ENCODE measurements at regions of chr6 and their contacts with region 1.

Region 1: GRCh38 chr6:15779726-15780125 is 116.9 kb upstream of the DTNBP1 start:
- DNase-seq: no peak
- ATAC-seq: no peak
- H3K4me3 ChIP-seq: no peak overlapping the region
- H3K27ac ChIP-seq: no peak overlapping the region
- H3K4me1 ChIP-seq: no peaks in the 10 kb centered on the region
- H3K27me3 ChIP-seq: no peaks in the 10 kb centered on the region
- CTCF ChIP-seq: no peak
- POLR2A ChIP-seq: no peak

Region 2: DNA sequence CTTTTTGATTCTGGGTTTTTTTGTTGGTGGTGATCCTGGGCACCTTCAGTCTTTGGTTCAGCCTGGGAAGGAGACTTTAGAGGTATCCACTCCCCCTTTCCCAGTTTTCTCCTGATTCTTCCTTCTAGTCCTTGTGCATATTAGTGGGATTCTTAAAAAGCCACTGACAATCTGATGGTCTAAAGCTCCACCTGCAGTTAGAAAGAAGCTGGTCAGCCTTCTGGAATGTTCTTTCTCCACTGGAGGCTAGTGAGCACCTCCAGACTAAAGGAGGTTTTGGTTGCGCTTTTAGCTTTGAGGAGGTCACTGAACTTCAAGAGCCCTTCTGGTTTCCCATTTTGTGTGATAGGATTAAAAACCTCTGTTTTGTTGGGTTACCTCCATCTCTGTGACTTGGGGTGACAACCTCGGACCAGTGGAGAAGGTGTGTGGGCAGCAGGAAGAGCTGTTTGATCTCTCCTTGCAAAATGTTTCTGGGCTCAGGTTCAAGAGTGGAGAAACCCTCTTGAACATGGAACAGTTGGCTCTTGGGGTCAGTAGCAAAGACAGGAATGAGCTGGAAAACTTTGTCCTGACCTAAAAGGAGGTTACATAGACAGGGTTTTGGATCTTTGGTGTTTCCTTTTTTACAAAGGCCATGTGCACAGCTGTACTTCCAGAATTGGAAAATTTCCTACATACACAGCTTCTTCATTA is 504.9 kb before region 1 on chr6:
- intact Hi-C with region 1: no loop called
- DNase-seq: no peak
- ATAC-seq: peak in 3 of 4 donors; percentile 28 to 48 (median 42)
- H3K4me3 ChIP-seq: no peak overlapping the region
- H3K27ac ChIP-seq: no peak overlapping the region
- H3K4me1 ChIP-seq: peaks cover 0 to 56% (median 32%) of the 10 kb centered on the region in 12 donors
- H3K27me3 ChIP-seq: no peaks in the 10 kb centered on the region
- CTCF ChIP-seq: peak in 8 of 12 donors; percentile 14 to 46 (median 28)
- POLR2A ChIP-seq: no peak

Region 3: GRCh38 chr6:15804174-15805154 is 24.7 kb after region 1 on chr6:
- intact Hi-C with region 1: loop called in 1 of 10 experiments (anchors 2 kb)
- DNase-seq: no peak
- ATAC-seq: no peak
- H3K4me3 ChIP-seq: no peak overlapping the region
- H3K27ac ChIP-seq: no peak overlapping the region
- H3K4me1 ChIP-seq: no peaks in the 10 kb centered on the region
- H3K27me3 ChIP-seq: no peaks in the 10 kb centered on the region
- CTCF ChIP-seq: no peak
- POLR2A ChIP-seq: no peak

Measured in heart left ventricle (tissue), 16 donors.